Adrenal gland (tissue), 19 donors: ENCODE measurements at regions of chr3 and their contacts with region 1.

Region 1: GRCh38 chr3:137946345-137946973 is 63.5 kb upstream of the CLDN18 start:
- DNase-seq: peak; percentile 19 to 67 (median 52)
- H3K4me3 ChIP-seq: no peak overlapping the region
- H3K27ac ChIP-seq: no peak overlapping the region
- H3K4me1 ChIP-seq: no peaks in the 10 kb centered on the region
- H3K27me3 ChIP-seq: no peaks in the 10 kb centered on the region
- CTCF ChIP-seq: peak; percentile 44 to 72 (median 62)
- POLR2A ChIP-seq: no peak

Region 2: DNA sequence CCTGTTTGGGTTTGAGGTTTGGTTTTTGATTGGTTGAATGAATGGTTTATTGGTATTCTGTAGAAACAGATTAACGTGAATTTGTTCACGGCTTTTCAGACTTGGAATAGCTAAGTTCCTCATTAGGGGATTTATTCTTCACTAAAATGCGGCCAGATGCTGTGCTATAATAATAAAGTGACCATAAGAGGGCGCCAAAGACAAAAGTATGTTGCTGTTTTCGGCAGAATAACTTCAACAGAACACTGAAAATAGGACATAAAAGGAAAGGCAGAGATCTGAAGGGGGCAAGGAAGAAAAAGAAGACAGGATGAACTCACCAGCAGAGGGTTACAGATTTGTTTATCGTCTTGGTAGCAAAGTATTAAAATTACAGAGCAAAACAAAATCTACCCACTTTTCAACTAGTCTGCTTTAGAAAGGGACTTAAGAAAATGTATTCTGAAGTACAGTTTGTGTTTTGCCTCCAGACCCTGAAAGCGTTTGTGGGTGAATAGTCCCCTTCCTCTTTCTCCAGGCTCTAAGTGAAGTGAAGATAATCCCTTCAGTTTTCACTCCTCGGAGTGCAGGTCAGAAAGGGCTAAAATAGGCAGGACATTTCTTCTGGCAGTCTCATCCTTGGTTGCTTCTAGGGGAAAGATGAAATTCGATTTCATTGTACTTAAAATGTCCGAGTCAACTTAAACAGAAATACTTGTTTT is 841.0 kb before region 1 on chr3:
- intact Hi-C with region 1: loop called in 1 of 2 experiments (anchors 10 kb)
- DNase-seq: peak in 4 of 7 donors; percentile 15 to 56 (median 31)
- H3K4me3 ChIP-seq: no peak overlapping the region
- H3K27ac ChIP-seq: no peak overlapping the region
- H3K4me1 ChIP-seq: no peaks in the 10 kb centered on the region
- H3K27me3 ChIP-seq: peaks cover 13% of the 10 kb centered on the region
- CTCF ChIP-seq: peak; percentile 56 to 71 (median 64)
- POLR2A ChIP-seq: no peak

Region 3: GRCh38 chr3:137612291-137612690 is 334.2 kb before region 1 on chr3:
- intact Hi-C with region 1: no loop called
- DNase-seq: no peak
- H3K4me3 ChIP-seq: no peak overlapping the region
- H3K27ac ChIP-seq: no peak overlapping the region
- H3K4me1 ChIP-seq: no peaks in the 10 kb centered on the region
- H3K27me3 ChIP-seq: no peaks in the 10 kb centered on the region
- CTCF ChIP-seq: no peak
- POLR2A ChIP-seq: no peak